Common myeloid progenitor, CD34-positive (primary cell): ENCODE measurements at regions of chr6 and their contacts with region 1.

Region 1: DNA sequence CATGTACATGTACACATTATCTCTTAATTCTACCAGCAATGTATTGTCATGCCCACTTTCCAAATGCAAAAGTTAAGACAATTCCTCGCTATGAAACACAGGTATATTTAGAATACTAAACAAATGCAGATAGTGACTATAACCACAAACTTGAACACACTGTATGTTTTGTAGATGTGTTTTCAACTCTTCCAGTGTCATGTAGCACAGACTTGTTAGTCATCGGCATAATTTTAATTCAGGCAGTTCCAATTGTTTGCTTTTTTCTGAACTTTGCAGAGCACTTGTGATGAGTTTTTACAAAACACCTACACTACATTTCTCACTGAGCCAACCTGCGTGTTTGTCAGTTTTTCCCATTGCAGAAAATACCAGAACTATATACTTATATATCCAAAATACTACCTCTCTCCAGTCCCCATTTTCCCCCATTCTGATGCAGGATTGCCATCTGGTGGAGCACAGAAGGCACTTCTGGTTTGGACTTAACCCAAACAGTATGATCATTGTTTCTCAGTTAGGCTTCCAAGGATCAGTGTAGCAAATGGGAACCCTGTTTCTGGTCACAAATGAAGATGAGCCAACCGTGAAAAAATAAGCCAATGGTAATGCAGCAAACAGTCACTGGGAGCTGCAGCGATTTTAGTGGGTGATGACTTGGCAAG is 143.4 kb downstream of the ADGRB3 start:
- DNase-seq: peak; percentile 71 to 83 (median 77)
- H3K4me3 ChIP-seq: no peak overlapping the region
- H3K27ac ChIP-seq: no peak overlapping the region
- H3K4me1 ChIP-seq: no peaks in the 10 kb centered on the region
- H3K27me3 ChIP-seq: peaks cover 0 to 4% (median 0%) of the 10 kb centered on the region in 5 experiments

Region 2: GRCh38 chr6:68252632-68253031 is 525.9 kb before region 1 on chr6:
- CTCF ChIA-PET with region 1: no interaction called
- POLR2A ChIA-PET with region 1: no interaction called
- DNase-seq: peak in 2 of 3 donors; percentile 23 to 28
- H3K4me3 ChIP-seq: no peak overlapping the region
- H3K27ac ChIP-seq: no peak overlapping the region
- H3K4me1 ChIP-seq: no peaks in the 10 kb centered on the region
- H3K27me3 ChIP-seq: no peaks in the 10 kb centered on the region

Region 3: DNA sequence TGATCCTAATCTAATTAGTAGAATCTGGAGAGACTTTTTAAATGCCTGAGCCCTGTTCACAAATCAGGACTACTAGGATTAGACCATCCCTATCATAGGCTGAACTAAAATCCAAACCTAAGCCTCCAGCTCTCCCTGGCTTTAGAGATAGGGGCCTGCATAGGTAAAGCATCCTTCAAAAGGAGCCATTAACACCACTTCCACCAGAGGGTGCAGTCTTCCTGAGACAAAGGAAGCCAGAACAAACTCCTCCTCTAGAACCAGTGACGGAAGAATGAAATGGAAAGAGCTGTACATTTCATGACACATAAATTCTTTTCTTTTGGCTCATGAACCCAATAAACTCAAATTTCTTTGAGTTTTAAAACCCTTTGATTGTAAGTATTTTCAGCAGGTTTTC is 434.6 kb before region 1 on chr6:
- CTCF ChIA-PET with region 1: interaction called, 16 read pairs
- POLR2A ChIA-PET with region 1: no interaction called
- DNase-seq: peak; percentile 22 to 67 (median 60)
- H3K4me3 ChIP-seq: no peak overlapping the region
- H3K27ac ChIP-seq: no peak overlapping the region
- H3K4me1 ChIP-seq: no peaks in the 10 kb centered on the region
- H3K27me3 ChIP-seq: no peaks in the 10 kb centered on the region

Region 4: DNA sequence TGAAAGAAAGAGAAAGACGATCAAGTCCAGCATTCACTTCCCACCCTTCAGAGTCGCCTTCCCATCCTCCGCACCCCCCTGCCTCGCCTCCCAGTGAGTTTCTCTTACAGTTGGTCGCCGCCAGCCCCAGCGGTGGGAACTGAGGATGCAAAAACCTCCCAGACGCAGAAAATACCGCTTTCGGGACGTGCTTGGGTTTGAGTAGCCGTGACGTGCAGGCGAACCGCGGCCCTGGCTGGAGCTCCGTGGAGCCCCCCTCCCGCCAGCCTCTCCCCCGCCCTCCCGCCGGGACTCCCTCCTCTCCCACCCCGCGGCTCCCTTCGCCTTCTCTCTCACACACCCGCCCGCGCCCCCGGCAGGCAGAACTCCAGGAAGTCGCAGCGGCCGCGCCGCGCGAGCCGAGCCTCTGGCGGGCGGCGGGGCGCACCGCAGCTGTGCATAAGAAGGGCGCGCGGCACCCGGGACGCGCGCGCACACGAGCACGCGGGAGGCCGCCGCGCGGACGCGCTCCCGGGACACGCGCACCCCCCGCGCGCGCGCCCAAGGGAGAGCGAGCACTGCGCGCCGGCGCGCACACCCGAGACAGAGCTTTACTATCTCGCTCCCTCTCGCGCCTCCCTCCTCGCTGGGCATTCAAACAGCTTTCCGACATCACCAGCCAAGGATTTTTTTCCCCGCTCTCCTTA is 143.6 kb before region 1 on chr6 and contains the start of gene ADGRB3:
- CTCF ChIA-PET with region 1: interaction called, 146 read pairs
- POLR2A ChIA-PET with region 1: no interaction called
- DNase-seq: peak; percentile 80 to 92 (median 88)
- H3K4me3 ChIP-seq: peak within 1 kb of the TSS; percentile 64 to 94 (median 76)
- H3K27ac ChIP-seq: no peak within 1 kb of the TSS
- H3K4me1 ChIP-seq: peaks cover 0 to 28% (median 14%) of the 10 kb centered on the region in 4 experiments
- H3K27me3 ChIP-seq: peaks cover 9 to 61% (median 22%) of the 10 kb centered on the region in 5 experiments

Region 5: GRCh38 chr6:68651011-68651985 is 127.2 kb before region 1 on chr6:
- CTCF ChIA-PET with region 1: interaction called, 11 read pairs
- POLR2A ChIA-PET with region 1: no interaction called
- DNase-seq: no peak
- H3K4me3 ChIP-seq: no peak overlapping the region
- H3K27ac ChIP-seq: no peak overlapping the region
- H3K4me1 ChIP-seq: peaks cover 0 to 9% (median 0%) of the 10 kb centered on the region in 4 experiments
- H3K27me3 ChIP-seq: no peaks in the 10 kb centered on the region

Region 6: GRCh38 chr6:68747110-68747790 is 31.2 kb before region 1 on chr6:
- CTCF ChIA-PET with region 1: no interaction called
- POLR2A ChIA-PET with region 1: no interaction called
- DNase-seq: no peak
- H3K4me3 ChIP-seq: no peak overlapping the region
- H3K27ac ChIP-seq: no peak overlapping the region
- H3K4me1 ChIP-seq: no peaks in the 10 kb centered on the region
- H3K27me3 ChIP-seq: no peaks in the 10 kb centered on the region

Region 7: GRCh38 chr6:68760941-68761676 is 17.4 kb before region 1 on chr6:
- CTCF ChIA-PET with region 1: interaction called, 19 read pairs
- POLR2A ChIA-PET with region 1: no interaction called
- DNase-seq: no peak
- H3K4me3 ChIP-seq: no peak overlapping the region
- H3K27ac ChIP-seq: no peak overlapping the region
- H3K4me1 ChIP-seq: peaks cover 5 to 14% (median 11%) of the 10 kb centered on the region in 4 experiments
- H3K27me3 ChIP-seq: no peaks in the 10 kb centered on the region

Region 8: DNA sequence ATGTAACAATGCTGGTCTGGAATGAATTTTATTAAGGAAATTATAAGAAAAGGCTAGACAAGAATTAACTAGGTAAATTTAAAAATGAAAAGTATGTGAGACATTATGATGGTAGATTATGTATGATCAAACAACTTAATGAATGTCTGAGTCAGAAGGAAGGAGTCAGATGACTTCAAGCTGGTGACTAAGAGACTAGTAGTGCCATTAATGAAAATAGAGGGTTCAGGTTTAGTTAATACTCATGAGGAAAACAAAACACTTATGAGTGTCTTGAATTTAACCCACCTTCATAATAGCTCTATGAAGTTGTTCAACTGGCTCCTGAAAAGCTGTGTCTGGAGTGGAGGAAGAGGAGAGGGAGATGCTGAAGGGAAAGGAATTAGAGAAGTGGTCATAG is 112.9 kb after region 1 on chr6:
- CTCF ChIA-PET with region 1: no interaction called
- POLR2A ChIA-PET with region 1: no interaction called
- DNase-seq: no peak
- H3K4me3 ChIP-seq: no peak overlapping the region
- H3K27ac ChIP-seq: no peak overlapping the region
- H3K4me1 ChIP-seq: no peaks in the 10 kb centered on the region
- H3K27me3 ChIP-seq: peaks cover 0 to 2% (median 0%) of the 10 kb centered on the region in 5 experiments